ENCODE measurements at regions of chr21 and their contacts with region 1.

Region 1: DNA sequence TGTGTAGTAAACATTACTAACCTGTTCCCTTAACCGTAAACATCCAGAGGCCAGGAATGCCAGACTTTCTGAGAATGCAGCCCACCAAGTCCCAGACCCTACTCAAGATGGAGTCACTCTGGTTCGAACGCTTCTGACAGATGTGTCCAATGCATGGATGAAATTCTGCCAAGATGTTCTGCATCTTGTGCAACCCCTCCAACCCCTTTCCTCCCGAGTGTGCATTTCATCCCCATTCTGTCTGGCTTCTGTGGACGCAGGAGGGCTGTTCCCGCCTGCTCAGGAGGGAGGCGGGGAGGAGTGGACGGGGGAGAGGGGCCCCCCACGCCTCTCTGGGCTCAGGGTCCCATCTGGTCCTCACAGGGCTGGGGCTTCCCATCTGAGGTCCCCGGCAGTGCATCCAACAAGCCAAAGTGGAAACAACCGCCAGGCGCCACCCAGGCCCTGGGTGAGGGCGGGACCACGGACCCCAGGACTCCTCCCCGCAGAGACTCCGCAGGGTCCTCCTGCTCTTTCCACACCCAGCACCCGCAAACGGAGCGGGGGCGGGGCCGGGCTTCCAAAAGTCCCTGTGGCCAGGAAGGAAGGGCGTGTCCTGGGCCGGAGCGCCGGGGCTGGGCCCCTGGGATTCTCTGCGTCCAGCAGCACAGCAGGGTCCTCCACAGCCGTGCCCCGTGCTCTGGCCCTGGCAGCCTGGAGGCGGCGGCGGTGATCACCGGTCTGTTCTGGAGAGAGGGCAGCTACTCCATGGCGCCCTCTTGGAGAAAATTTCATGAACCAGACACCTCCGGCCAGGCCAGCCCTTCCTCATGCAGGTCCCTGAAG is 27.7 kb upstream of the SUMO3 start:
- DNase-seq: peak in 12 of 14 experiments; percentile 24 to 74 (median 38)
- ATAC-seq: peak; percentile 66
- H3K4me3 ChIP-seq: peak overlapping the region; percentile 52
- H3K4me3 Mint-ChIP-seq: peak overlapping the region; percentile 80
- H3K27ac ChIP-seq: no peak overlapping the region
- H3K27ac Mint-ChIP-seq: peak overlapping the region; percentile 86
- H3K4me1 ChIP-seq: peaks cover 25% of the 10 kb centered on the region
- H3K4me1 Mint-ChIP-seq: peaks cover 12% of the 10 kb centered on the region
- H3K27me3 ChIP-seq: no peaks in the 10 kb centered on the region
- H3K27me3 Mint-ChIP-seq: no peaks in the 10 kb centered on the region
- CTCF ChIP-seq: peak; percentile 63

Region 2: DNA sequence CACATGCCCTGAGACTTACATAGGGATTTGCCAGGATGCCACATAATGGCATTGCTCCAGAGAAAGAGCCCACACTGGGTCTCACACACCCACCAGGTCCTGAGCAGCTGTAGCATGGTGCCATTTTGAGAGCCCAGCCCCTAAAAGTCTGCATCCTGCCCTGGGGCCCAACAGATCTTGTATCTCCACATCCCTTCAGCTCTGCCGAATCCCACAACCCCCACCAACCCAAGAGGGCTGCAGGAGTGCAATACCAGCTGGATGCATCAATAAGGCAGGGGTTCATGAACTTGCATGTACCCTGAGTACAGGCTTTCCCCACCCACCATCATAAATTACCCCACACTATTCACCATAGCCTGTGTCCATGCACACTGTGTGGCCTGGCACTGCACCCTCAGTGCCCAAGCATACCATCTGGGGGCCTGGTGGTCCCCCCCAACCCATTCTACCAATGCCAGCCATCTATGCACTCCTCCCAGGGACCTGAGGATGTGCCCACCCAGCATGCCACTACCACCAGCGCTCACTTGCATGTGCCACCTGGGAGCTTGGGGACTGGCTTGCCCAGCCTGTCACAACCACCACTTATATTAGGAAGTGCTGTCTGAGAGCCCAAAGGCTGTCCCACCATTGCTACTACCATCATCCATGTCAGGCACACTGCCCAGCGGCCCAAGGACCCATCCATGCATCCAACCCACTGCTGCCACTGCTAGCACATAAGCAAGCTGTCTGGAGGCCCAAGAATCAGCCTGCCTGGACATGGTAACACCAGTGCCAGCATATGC is 174.8 kb before region 1 on chr21:
- CTCF ChIA-PET with region 1: no interaction called
- POLR2A ChIA-PET with region 1: no interaction called
- intact Hi-C with region 1: no loop called
- DNase-seq: no peak
- ATAC-seq: no peak
- H3K4me3 ChIP-seq: no peak overlapping the region
- H3K4me3 Mint-ChIP-seq: no peak overlapping the region
- H3K27ac ChIP-seq: no peak overlapping the region
- H3K27ac Mint-ChIP-seq: no peak overlapping the region
- H3K4me1 ChIP-seq: no peaks in the 10 kb centered on the region
- H3K4me1 Mint-ChIP-seq: no peaks in the 10 kb centered on the region
- H3K27me3 ChIP-seq: peaks cover 0 to 2% of the 10 kb centered on the region in 2 experiments
- H3K27me3 Mint-ChIP-seq: peaks cover 5% of the 10 kb centered on the region
- CTCF ChIP-seq: no peak

Region 3: GRCh38 chr21:44822484-44823178 is 23.0 kb before region 1 on chr21:
- CTCF ChIA-PET with region 1: interaction called, 3 read pairs
- POLR2A ChIA-PET with region 1: no interaction called
- intact Hi-C with region 1: loop called in 1 of 2 experiments (anchors 2 kb)
- DNase-seq: no peak
- ATAC-seq: no peak
- H3K4me3 ChIP-seq: no peak overlapping the region
- H3K4me3 Mint-ChIP-seq: peak overlapping the region; percentile 7
- H3K27ac ChIP-seq: no peak overlapping the region
- H3K27ac Mint-ChIP-seq: peak overlapping the region; percentile 36
- H3K4me1 ChIP-seq: peaks cover 7% of the 10 kb centered on the region
- H3K4me1 Mint-ChIP-seq: no peaks in the 10 kb centered on the region
- H3K27me3 ChIP-seq: no peaks in the 10 kb centered on the region
- H3K27me3 Mint-ChIP-seq: no peaks in the 10 kb centered on the region
- CTCF ChIP-seq: no peak